ENCODE measurements at regions of chr3 and their contacts with region 1.

Region 1: GRCh38 chr3:113019182-113020137 is 28.7 kb downstream of the GTPBP8 start:
- DNase-seq: peak; percentile 55 to 91 (median 77)
- ATAC-seq: peak; percentile 85 to 89 (median 87)
- H3K4me3 ChIP-seq: peak overlapping the region; percentile 54 to 89
- H3K4me3 Mint-ChIP-seq: peak overlapping the region; percentile 86 to 95 (median 94)
- H3K27ac ChIP-seq: peak overlapping the region; percentile 97
- H3K27ac Mint-ChIP-seq: peak overlapping the region; percentile 90 to 92
- H3K4me1 ChIP-seq: peaks cover 20 to 26% of the 10 kb centered on the region in 2 experiments
- H3K4me1 Mint-ChIP-seq: peaks cover 57 to 85% (median 73%) of the 10 kb centered on the region in 3 donors
- H3K27me3 ChIP-seq: no peaks in the 10 kb centered on the region
- H3K27me3 Mint-ChIP-seq: no peaks in the 10 kb centered on the region

Region 2: GRCh38 chr3:111998636-111999483 is 1020.6 kb before region 1 on chr3 and contains the start of gene TAGLN3:
- CTCF ChIA-PET with region 1: no interaction called
- POLR2A ChIA-PET with region 1: interaction called in 1 of 2 experiments, 11 read pairs
- DNase-seq: peak in 2 of 35 experiments; percentile 0 to 19
- ATAC-seq: peak; percentile 28 to 62 (median 36)
- H3K4me3 ChIP-seq: peak within 1 kb of the TSS in 1 of 2 donors; percentile 80
- H3K4me3 Mint-ChIP-seq: peak within 1 kb of the TSS; percentile 69 to 77 (median 72)
- H3K27ac ChIP-seq: no peak within 1 kb of the TSS
- H3K27ac Mint-ChIP-seq: no peak within 1 kb of the TSS
- H3K4me1 ChIP-seq: peaks cover 21 to 29% of the 10 kb centered on the region in 2 experiments
- H3K4me1 Mint-ChIP-seq: peaks cover 28 to 35% (median 34%) of the 10 kb centered on the region in 3 donors
- H3K27me3 ChIP-seq: peaks cover 0 to 10% of the 10 kb centered on the region in 2 experiments
- H3K27me3 Mint-ChIP-seq: peaks cover 1 to 4% of the 10 kb centered on the region in 2 donors
- total RNA-seq, gene TAGLN3: not detected

Region 3: DNA sequence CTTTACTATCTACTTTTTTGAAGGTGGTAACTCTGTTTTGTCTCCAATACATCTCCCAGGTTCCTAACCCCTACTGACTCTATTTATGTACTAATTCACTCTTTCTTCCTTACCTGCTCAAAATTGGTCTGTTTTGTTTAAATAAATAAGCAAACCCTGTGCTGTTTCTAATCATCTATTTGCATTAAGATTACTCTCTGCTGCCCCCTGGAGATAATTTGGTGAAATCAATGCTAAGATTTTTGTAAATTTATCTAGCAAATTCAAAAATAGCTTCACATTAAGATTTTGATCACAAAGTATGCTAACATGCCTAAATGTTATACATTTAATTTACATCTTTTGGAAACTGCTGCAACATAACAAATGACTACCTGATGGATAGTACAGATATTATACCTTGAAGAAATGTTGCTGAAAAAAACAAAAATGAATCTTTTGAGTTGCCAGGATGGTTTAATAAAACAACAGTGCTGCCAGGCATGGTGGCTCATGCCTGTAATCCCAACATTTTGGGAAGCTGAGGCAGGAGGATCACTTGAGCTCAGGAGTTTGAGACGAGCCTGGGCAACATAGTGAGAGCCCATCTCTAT is 40.1 kb before region 1 on chr3:
- CTCF ChIA-PET with region 1: interaction called, 3 to 13 read pairs
- POLR2A ChIA-PET with region 1: no interaction called
- DNase-seq: peak in 6 of 35 experiments; percentile 19 to 76 (median 30)
- ATAC-seq: no peak
- H3K4me3 ChIP-seq: no peak overlapping the region
- H3K4me3 Mint-ChIP-seq: no peak overlapping the region
- H3K27ac ChIP-seq: no peak overlapping the region
- H3K27ac Mint-ChIP-seq: peak overlapping the region in 1 of 2 donors; percentile 8
- H3K4me1 ChIP-seq: peaks cover 31 to 53% of the 10 kb centered on the region in 2 experiments
- H3K4me1 Mint-ChIP-seq: peaks cover 66 to 75% (median 69%) of the 10 kb centered on the region in 3 donors
- H3K27me3 ChIP-seq: no peaks in the 10 kb centered on the region
- H3K27me3 Mint-ChIP-seq: no peaks in the 10 kb centered on the region

Region 4: GRCh38 chr3:112990672-112991602 is 28.5 kb before region 1 on chr3 and contains the start of gene GTPBP8:
- CTCF ChIA-PET with region 1: interaction called in 1 of 2 experiments, 4 read pairs
- POLR2A ChIA-PET with region 1: interaction called, 4 to 16 read pairs
- DNase-seq: peak; percentile 58 to 91 (median 74)
- ATAC-seq: peak; percentile 89 to 95 (median 94)
- H3K4me3 ChIP-seq: peak within 1 kb of the TSS; percentile 84 to 99
- H3K4me3 Mint-ChIP-seq: peak within 1 kb of the TSS; percentile 90 to 96 (median 92)
- H3K27ac ChIP-seq: peak within 1 kb of the TSS; percentile 94
- H3K27ac Mint-ChIP-seq: peak within 1 kb of the TSS; percentile 90 to 98
- H3K4me1 ChIP-seq: peaks cover 19 to 32% of the 10 kb centered on the region in 2 experiments
- H3K4me1 Mint-ChIP-seq: peaks cover 57 to 74% (median 70%) of the 10 kb centered on the region in 3 donors
- H3K27me3 ChIP-seq: no peaks in the 10 kb centered on the region
- H3K27me3 Mint-ChIP-seq: no peaks in the 10 kb centered on the region
- total RNA-seq, gene GTPBP8: 17.2 to 31.3 (median 27.5) TPM

Region 5: DNA sequence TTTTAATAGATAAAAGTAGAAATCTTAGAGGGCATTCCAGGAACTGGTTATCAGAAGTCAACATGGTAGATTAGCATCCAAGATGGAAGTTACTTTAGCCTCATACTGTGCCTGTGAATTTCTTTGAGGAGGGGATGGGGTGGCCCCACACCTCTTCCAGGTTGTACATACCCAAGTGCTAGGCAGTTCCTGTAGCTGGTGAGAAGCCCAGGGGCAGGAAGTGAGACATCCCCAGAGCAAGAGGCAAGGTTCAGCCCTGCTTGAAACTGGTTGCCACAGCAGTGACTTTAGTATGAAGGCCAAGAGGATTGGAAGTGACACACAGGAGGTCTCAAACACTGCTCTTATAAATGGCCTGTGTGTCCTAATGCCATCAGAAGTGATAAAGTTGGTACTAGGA is 16.8 kb before region 1 on chr3:
- CTCF ChIA-PET with region 1: interaction called in 1 of 2 experiments, 6 read pairs
- POLR2A ChIA-PET with region 1: interaction called, 9 to 21 read pairs
- DNase-seq: peak in 25 of 35 experiments; percentile 16 to 60 (median 35)
- ATAC-seq: peak; percentile 40 to 76 (median 70)
- H3K4me3 ChIP-seq: no peak overlapping the region
- H3K4me3 Mint-ChIP-seq: peak overlapping the region in 1 of 3 donors; percentile 19
- H3K27ac ChIP-seq: peak overlapping the region; percentile 61
- H3K27ac Mint-ChIP-seq: peak overlapping the region; percentile 81 to 88
- H3K4me1 ChIP-seq: peaks cover 22 to 65% of the 10 kb centered on the region in 2 experiments
- H3K4me1 Mint-ChIP-seq: peaks cover 76 to 82% (median 79%) of the 10 kb centered on the region in 3 donors
- H3K27me3 ChIP-seq: no peaks in the 10 kb centered on the region
- H3K27me3 Mint-ChIP-seq: no peaks in the 10 kb centered on the region